Esophagus muscularis mucosa (tissue), 4 donors: ENCODE measurements at regions of chr15 and their contacts with region 1.

Region 1: GRCh38 chr15:99565299-99566156 is at the start of gene MEF2A:
- DNase-seq: peak; percentile 97
- H3K4me3 ChIP-seq: peak within 1 kb of the TSS; percentile 73 to 94 (median 89)
- H3K27ac ChIP-seq: peak within 1 kb of the TSS; percentile 97 to 99 (median 99)
- H3K4me1 ChIP-seq: peaks cover 27 to 49% (median 46%) of the 10 kb centered on the region in 4 donors
- H3K27me3 ChIP-seq: no peaks in the 10 kb centered on the region
- CTCF ChIP-seq: no peak
- EP300 ChIP-seq: no peak
- POLR2A ChIP-seq: peak; percentile 94
- total RNA-seq, gene MEF2A: 63.1 to 76.7 (median 73.3) TPM

Region 2: GRCh38 chr15:99409097-99409473 is 156.4 kb before region 1 on chr15:
- intact Hi-C with region 1: loop called (anchors 10 kb)
- DNase-seq: peak; percentile 92
- H3K4me3 ChIP-seq: no peak overlapping the region
- H3K27ac ChIP-seq: peak overlapping the region; percentile 6 to 71 (median 51)
- H3K4me1 ChIP-seq: peaks cover 18 to 25% (median 24%) of the 10 kb centered on the region in 4 donors
- H3K27me3 ChIP-seq: no peaks in the 10 kb centered on the region
- CTCF ChIP-seq: peak; percentile 39 to 63 (median 52)
- EP300 ChIP-seq: no peak
- POLR2A ChIP-seq: no peak

Region 3: GRCh38 chr15:99507504-99508310 is 57.8 kb before region 1 on chr15:
- intact Hi-C with region 1: loop called (anchors 5 kb)
- DNase-seq: no peak
- H3K4me3 ChIP-seq: peak overlapping the region; percentile 6 to 33 (median 17)
- H3K27ac ChIP-seq: peak overlapping the region; percentile 76 to 87 (median 82)
- H3K4me1 ChIP-seq: peaks cover 50 to 81% (median 71%) of the 10 kb centered on the region in 4 donors
- H3K27me3 ChIP-seq: no peaks in the 10 kb centered on the region
- CTCF ChIP-seq: no peak
- EP300 ChIP-seq: peak; percentile 48
- POLR2A ChIP-seq: no peak

Region 4: GRCh38 chr15:99631255-99631654 is 65.7 kb after region 1 on chr15:
- intact Hi-C with region 1: no loop called
- DNase-seq: no peak
- H3K4me3 ChIP-seq: no peak overlapping the region
- H3K27ac ChIP-seq: peak overlapping the region; percentile 14 to 47 (median 26)
- H3K4me1 ChIP-seq: peaks cover 36 to 48% (median 44%) of the 10 kb centered on the region in 4 donors
- H3K27me3 ChIP-seq: no peaks in the 10 kb centered on the region
- CTCF ChIP-seq: no peak
- EP300 ChIP-seq: no peak
- POLR2A ChIP-seq: no peak

Region 5: GRCh38 chr15:99704444-99704838 is 138.9 kb after region 1 on chr15:
- intact Hi-C with region 1: loop called (anchors 5 kb)
- DNase-seq: no peak
- H3K4me3 ChIP-seq: no peak overlapping the region
- H3K27ac ChIP-seq: peak overlapping the region; percentile 72 to 78 (median 77)
- H3K4me1 ChIP-seq: peaks cover 43 to 61% (median 47%) of the 10 kb centered on the region in 4 donors
- H3K27me3 ChIP-seq: no peaks in the 10 kb centered on the region
- CTCF ChIP-seq: peak; percentile 75 to 84 (median 80)
- EP300 ChIP-seq: no peak
- POLR2A ChIP-seq: no peak

Region 6: DNA sequence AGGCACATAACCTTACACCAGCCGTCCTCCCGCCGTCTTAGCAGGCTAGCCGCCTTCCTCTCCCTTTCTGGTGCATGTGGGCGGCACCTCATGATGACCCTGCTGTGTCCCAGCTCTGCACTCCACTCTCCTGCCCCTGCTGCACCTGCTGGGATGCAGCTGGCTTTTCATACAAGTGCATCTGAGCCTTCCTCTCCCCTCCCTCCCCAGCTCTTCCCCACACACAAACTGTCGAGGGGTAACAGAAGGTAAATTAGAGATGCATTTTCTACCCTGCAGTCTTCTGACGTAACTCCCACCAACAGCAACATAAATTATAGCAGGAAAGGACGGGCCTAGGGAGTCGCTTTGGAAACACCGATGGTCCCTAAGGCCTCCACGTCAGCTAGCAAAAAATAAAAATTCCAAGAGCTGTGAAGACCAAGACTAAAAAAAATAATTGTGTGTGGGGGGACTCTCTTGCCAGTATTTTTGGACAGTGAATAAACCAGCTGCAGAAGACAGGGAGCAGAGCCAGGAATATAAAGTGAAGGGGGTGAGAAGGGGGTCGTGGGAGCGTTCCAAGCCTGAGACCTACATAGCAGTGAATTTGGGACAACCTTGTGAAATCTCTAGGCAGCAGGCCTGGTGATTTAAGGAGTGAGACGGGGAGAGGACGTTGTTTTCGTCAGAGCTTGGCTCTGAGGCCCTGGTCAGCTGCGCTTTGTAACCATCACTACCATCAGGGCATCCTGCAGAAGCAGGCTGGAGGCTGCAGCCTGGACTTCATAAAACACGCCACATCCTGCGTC is 560.1 kb after region 1 on chr15:
- intact Hi-C with region 1: no loop called
- DNase-seq: no peak
- H3K4me3 ChIP-seq: no peak overlapping the region
- H3K27ac ChIP-seq: peak overlapping the region; percentile 20 to 72 (median 48)
- H3K4me1 ChIP-seq: peaks cover 0 to 19% (median 18%) of the 10 kb centered on the region in 4 donors
- H3K27me3 ChIP-seq: no peaks in the 10 kb centered on the region
- CTCF ChIP-seq: no peak
- EP300 ChIP-seq: no peak
- POLR2A ChIP-seq: no peak